Ovary (tissue), 10 donors: ENCODE measurements at regions of chr17 and their contacts with region 1.

Region 1: DNA sequence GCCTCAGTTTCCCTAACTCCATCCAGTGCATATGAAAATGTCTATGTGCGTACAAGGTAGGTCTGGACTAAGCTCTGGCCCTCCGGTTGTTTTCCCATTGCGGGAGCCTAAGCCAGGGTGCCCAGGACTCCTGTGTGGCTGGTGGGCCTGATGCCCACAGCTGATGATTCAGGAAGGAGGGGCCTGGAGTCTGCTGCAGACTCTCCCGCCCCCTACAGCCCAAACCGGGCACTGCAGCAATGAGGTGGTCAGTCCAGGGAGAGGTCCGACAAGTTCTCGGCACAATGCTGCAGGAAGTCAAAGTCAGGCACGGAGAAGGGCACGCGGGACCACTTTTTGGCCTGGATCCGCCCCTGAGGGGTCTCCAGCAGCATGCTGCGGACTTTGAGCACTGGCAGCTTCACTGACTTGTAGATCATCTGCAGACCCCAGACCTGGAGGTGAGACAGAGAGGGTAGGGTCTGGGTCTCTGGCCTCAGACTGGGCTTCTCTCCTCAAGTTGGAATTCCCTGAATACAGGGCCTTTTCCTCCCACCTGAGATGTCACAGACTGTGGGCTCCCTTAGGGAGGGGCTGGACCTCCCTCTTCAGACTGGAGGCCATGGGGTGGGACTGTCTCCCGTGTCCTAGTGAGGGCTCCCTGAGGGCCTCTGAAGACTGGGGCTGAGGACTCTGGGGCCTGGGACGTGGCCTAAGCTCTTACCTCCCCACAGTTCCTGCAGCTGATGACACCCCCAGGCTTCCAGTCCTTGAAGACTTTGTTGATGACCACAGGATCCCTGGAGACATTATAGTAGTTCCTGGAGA is 3.4 kb upstream of the ZNF385C start:
- DNase-seq: peak; percentile 52 to 84 (median 78)
- H3K4me3 ChIP-seq: no peak overlapping the region
- H3K27ac ChIP-seq: no peak overlapping the region
- H3K4me1 ChIP-seq: peaks cover 3% of the 10 kb centered on the region
- H3K27me3 ChIP-seq: no peaks in the 10 kb centered on the region
- CTCF ChIP-seq: peak; percentile 42 to 60 (median 54)
- EP300 ChIP-seq: no peak
- POLR2A ChIP-seq: no peak

Region 2: DNA sequence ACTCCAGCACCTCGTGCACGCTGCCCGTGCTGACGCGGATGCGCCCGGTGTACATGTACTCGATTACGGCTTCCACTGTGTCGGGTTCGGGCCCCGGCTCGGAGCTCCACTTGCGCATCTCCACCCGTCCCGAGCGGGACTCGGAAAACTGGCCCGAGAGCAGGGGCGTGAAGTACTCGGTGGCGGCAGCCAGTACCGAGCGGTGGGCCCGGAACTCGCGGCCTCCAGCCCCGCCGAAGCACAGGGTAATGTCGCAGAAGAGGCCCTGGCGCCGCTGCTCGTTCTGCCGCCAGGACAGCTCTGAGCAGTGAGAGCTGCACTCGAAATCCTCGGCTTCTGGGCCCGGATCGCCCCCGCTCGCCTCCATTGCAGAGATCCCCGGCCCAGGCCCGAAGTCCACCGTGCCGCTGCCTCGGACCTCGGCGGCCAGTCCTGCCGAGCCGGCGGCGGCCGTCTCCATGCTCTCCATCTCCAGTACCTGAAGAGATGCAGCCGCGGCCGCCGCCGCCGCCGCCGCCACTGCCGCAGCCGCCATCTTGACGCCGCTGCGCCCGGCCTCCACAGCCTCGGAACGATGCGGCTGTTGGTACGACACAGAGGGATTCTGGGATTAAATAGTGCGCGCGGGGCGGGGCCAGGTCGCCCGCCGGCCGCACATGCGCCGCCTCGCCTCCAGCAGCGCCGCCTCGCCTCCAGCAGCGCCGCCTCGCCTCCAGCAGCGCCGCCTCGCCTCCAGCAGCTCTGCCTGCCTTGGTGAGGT is 236.7 kb before region 1 on chr17 and contains the start of gene KLHL11:
- intact Hi-C with region 1: no loop called
- DNase-seq: peak; percentile 80 to 92 (median 88)
- H3K4me3 ChIP-seq: peak within 1 kb of the TSS; percentile 99
- H3K27ac ChIP-seq: peak within 1 kb of the TSS; percentile 50 to 85
- H3K4me1 ChIP-seq: peaks cover 10% of the 10 kb centered on the region
- H3K27me3 ChIP-seq: no peaks in the 10 kb centered on the region
- CTCF ChIP-seq: no peak
- EP300 ChIP-seq: no peak
- POLR2A ChIP-seq: peak; percentile 90
- total RNA-seq, gene KLHL11: 18.9 to 30.5 (median 20.6) TPM

Region 3: DNA sequence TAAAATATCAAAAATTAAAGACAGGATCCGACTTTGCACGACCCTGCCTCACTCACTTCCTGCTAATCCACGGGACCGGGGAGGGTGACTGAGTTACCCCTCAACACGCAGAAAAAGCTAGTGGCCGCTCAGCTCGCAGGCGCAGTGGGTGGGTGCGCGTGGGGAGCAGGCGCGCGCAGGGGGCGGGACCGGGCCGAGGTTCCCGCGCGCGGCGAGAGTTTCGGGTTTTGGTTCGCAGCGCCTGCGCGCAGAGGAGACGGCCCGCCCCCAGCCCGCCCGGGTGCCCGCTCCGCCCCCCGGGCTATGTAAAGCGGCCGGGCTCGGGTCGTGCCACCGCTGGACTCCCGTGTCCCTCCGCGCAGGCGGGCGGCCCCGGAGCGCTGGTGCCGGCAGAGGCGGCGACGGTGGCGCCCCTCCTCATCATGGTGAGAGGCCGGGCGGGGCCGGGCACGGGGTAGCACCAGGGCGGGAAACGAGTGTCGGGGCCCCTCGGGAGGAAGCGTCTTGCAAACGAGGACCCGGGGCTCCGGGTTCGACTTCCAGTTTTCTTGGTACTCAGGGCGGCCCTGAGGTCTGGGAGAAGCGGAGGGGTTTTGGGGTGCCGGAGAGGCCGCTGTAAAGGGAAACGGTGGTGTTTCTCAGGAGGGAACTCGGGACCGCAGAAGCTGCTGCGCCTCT is 135.1 kb before region 1 on chr17 and contains the start of gene CNP:
- intact Hi-C with region 1: loop called in 1 of 4 experiments (anchors 5 kb)
- DNase-seq: peak; percentile 89 to 95 (median 91)
- H3K4me3 ChIP-seq: peak within 1 kb of the TSS; percentile 95
- H3K27ac ChIP-seq: peak within 1 kb of the TSS; percentile 64 to 70
- H3K4me1 ChIP-seq: peaks cover 7% of the 10 kb centered on the region
- H3K27me3 ChIP-seq: no peaks in the 10 kb centered on the region
- CTCF ChIP-seq: peak in 1 of 3 donors; percentile 29
- EP300 ChIP-seq: no peak
- POLR2A ChIP-seq: peak; percentile 40
- total RNA-seq, gene CNP: 30.5 to 88.9 (median 77.5) TPM

Region 4: DNA sequence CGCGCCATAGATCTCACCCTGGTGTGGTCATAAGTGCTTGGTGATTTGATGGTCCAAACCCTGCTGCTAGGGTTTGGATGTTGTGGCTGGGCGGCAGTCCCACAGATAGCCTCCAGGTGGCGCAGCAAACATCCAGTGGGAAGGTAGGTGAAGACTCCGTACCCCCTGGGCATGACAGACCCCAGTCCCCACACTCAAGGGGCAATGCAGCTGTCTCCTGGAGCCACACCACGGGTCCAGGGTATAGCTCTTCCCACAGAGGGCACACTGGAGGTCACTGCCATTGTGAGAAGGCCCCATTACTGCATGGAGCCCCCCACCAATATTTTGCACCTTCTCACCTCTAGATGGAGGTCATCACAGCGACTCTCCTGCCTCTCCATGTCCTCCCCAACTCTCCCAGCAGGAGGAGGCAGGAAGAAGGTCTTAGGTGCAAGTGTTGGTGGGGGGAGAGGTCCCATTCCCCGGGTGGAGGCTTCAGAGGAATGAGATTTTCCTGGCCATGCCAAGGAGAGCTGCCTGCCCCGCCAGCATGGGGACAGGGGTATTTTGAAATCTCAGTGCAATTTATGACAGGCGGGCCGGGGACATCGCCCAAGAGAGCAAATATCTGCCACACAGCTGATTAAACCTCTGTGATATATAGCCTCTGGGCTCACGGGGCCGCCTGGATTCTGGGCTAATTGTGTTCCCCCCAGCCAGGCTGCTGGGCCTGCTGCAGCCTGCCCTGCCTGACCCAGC is 34.2 kb before region 1 on chr17:
- intact Hi-C with region 1: loop called in 1 of 4 experiments (anchors 5 kb)
- DNase-seq: peak; percentile 63 to 83 (median 78)
- H3K4me3 ChIP-seq: no peak overlapping the region
- H3K27ac ChIP-seq: no peak overlapping the region
- H3K4me1 ChIP-seq: no peaks in the 10 kb centered on the region
- H3K27me3 ChIP-seq: no peaks in the 10 kb centered on the region
- CTCF ChIP-seq: peak; percentile 71 to 90 (median 86)
- EP300 ChIP-seq: no peak
- POLR2A ChIP-seq: no peak